ENCODE measurements at regions of chr12 and their contacts with region 1.

Region 1: DNA sequence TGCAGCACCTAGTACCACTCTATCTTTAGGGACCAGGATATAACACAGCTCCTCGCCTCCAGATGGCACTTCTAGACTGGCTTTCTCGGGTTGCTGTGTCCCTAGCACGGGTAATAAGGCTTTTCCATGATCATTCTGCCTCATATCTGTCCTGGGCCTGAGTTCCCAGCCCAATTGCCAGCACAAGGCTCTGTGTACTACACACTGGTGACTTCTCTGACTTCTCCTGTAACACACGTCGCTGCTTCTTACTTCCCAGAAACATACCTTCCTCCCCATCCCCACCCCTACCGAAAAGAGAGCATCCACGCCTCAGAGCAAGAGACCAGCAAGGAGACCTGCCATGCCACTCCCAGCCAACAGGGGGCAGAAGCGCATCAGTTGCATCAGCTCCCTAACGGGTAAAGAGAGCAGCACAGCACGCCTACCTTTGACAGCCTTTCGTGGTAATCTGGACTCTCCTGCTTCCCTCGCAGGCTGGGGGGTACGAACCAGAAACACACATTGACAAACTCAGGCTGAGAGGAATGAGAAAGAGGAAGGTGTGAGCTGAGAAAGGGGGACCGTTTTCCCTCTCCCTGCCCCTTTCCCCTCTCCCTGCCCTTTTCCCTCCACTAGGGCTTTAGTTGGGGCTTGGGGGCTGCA is 21.2 kb upstream of the ZNF740 start:
- DNase-seq: peak; percentile 96
- ATAC-seq: peak; percentile 99
- H3K4me3 Mint-ChIP-seq: peak overlapping the region; percentile 27
- H3K27ac Mint-ChIP-seq: peak overlapping the region; percentile 81
- H3K4me1 Mint-ChIP-seq: peaks cover 11% of the 10 kb centered on the region
- H3K27me3 Mint-ChIP-seq: no peaks in the 10 kb centered on the region

Region 2: DNA sequence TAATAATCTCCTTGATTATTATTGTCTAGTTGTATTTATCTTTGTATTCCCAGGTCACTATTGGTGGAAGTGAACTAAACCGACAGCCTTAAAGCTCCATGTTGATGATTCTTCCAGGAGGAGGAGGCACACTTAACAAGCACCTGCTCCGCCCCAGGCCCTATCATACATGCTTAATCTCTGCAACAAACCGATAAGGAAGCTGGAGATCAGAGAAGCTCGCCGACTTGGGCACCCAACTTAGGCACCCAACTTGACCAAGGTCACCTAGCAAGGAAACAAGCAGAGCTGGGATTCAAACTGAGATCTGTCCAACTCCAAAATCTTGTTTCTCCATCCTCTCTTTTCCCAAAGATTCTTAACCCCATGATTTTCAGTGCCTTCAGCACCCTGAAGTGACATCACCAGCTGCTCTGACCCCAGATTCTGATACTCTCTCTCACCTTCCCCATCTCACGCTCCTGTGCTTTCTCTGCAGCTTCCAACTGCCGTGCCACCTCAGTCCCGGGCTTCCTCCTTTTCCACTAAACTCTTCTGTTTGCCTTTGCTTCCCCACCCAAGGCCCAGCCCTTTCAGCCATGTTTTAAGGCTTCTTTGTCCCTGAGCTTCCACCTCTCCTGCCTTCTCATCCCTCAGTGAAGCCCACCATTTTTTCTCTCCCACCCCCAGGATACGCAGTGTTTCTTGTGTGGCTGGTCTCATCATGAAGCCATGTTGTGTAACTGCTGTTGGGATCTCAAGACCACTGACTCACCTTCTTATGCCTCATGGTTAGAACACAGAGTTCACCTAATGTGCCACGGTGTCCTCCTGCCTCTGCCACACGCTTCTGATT is 217.0 kb before region 1 on chr12:
- CTCF ChIA-PET with region 1: no interaction called
- POLR2A ChIA-PET with region 1: no interaction called
- intact Hi-C with region 1: no loop called
- DNase-seq: no peak
- ATAC-seq: no peak
- H3K4me3 Mint-ChIP-seq: no peak overlapping the region
- H3K27ac Mint-ChIP-seq: no peak overlapping the region
- H3K4me1 Mint-ChIP-seq: no peaks in the 10 kb centered on the region
- H3K27me3 Mint-ChIP-seq: peaks cover 2% of the 10 kb centered on the region

Region 3: DNA sequence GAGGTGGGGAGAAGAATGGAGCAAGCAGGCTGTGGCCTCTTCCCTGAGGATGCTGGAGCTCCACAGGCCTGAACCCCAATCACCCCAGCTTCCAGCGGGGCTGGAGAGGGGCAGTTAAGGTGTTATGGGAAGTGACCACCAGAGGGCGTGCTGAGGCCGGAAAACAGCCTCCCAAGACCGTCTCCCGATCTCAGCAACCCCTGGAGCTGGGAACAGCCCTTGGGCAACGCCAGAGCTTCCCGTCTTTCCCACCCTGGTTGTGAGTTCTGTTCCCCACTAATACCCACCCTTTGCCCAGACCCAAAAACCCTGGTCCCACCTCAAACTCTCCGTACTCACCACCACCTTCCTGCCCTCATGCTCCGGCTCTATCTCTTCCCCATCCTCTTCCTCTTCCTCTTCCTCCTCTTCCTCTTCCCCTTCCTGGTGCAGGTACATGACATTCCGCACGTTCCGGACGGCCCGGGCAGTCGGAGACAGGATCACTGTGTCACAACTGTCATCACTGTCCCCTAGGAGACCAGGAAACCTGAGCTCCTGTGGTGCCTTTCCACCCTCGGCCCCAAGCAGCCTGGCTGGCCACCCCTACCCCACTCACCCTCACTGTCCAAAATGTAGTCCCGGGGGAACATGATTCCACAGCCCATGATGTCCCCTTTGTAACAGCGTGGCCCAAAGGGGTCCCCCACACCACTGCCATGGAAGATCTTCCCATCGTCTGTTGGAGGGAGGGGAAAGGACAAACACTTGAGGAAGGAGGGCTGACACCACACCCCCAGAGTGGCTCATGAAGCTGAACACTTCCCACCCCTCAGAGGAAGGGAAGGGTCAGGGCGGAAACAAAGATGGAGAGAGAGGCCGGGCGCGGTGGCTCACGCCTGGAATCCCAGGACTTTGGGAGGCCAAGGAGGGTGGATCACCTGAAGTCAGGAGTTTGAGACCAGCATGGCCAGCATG is 93.1 kb before region 1 on chr12:
- CTCF ChIA-PET with region 1: interaction called, 11 read pairs
- POLR2A ChIA-PET with region 1: no interaction called
- intact Hi-C with region 1: no loop called
- DNase-seq: peak; percentile 85
- ATAC-seq: peak; percentile 78
- H3K4me3 Mint-ChIP-seq: no peak overlapping the region
- H3K27ac Mint-ChIP-seq: peak overlapping the region; percentile 48
- H3K4me1 Mint-ChIP-seq: peaks cover 7% of the 10 kb centered on the region
- H3K27me3 Mint-ChIP-seq: no peaks in the 10 kb centered on the region

Region 4: GRCh38 chr12:53090563-53090962 is 68.8 kb before region 1 on chr12:
- CTCF ChIA-PET with region 1: no interaction called
- POLR2A ChIA-PET with region 1: no interaction called
- intact Hi-C with region 1: no loop called
- DNase-seq: no peak
- ATAC-seq: no peak
- H3K4me3 Mint-ChIP-seq: no peak overlapping the region
- H3K27ac Mint-ChIP-seq: no peak overlapping the region
- H3K4me1 Mint-ChIP-seq: no peaks in the 10 kb centered on the region
- H3K27me3 Mint-ChIP-seq: peaks cover 2% of the 10 kb centered on the region

Region 5: DNA sequence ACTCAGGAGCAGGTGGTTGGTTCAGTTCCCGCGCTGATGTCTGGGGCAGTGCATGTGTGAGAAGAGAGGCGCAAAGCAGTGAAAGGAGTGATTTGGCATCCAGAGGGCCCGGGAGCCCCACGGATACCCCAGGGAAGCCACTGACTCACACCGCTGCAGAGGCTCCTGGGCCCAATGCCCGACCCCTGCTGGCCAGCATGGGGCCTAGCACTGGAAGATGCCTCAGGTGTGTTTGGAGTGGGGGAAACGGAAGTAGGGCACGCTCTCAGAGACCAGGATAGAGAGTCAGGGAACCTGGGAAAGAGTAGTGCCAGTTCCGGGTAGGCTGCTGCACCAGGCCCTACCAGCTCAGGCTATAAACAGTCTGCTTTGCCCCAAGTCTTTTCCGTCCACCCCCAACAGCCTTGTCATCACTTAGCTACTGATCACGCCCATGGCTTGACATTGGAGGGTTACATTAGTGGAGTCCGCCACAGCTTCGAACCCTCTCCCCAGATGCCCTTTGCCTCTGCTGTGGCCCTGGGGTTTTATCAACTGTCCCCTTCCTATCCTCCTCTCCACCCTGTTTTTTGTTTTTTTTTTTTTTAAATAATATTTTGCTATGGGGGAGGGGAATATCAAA is 30.9 kb after region 1 on chr12:
- CTCF ChIA-PET with region 1: interaction called, 94 read pairs
- POLR2A ChIA-PET with region 1: interaction called, 3 read pairs
- intact Hi-C with region 1: loop called (anchors 1 to 2 kb)
- DNase-seq: peak; percentile 74
- ATAC-seq: peak; percentile 94
- H3K4me3 Mint-ChIP-seq: no peak overlapping the region
- H3K27ac Mint-ChIP-seq: peak overlapping the region; percentile 17
- H3K4me1 Mint-ChIP-seq: peaks cover 14% of the 10 kb centered on the region
- H3K27me3 Mint-ChIP-seq: no peaks in the 10 kb centered on the region

Region 6: DNA sequence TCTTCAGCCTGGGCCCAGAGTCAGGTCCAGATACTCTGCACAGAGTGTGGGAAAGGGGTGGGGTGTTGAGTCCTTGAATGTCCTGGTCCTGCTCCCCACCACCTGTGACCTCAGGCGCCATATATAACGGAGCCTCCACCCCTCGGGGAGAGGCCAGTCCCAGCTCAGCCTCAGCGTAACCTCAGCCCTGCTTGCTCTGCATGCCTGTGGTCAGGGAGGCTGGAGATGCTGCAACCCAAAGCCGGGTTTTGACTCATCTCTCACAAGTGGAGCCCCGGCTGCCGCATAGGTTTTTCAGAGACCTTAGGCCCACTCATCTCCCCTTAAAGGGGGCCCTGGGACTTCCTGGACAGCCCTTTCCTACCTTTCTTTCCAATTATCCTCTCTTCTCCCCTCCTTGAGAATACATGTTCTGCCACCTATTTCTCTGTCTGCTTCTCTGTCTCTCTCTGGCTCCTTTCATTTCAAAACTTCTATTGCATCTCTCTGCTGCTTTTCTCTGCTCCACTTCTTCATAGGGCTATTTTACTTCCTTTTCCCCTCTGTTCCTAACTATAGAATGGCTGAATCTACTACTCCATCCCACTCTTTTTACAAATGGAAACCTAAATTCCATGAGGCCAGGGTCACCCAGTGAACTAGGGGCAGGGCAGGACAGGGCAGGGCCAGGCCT is 46.6 kb after region 1 on chr12:
- CTCF ChIA-PET with region 1: interaction called, 7 read pairs
- POLR2A ChIA-PET with region 1: no interaction called
- intact Hi-C with region 1: loop called in 1 of 2 experiments (anchors 2 kb)
- DNase-seq: peak; percentile 89
- ATAC-seq: peak; percentile 78
- H3K4me3 Mint-ChIP-seq: peak overlapping the region; percentile 77
- H3K27ac Mint-ChIP-seq: peak overlapping the region; percentile 87
- H3K4me1 Mint-ChIP-seq: peaks cover 74% of the 10 kb centered on the region
- H3K27me3 Mint-ChIP-seq: no peaks in the 10 kb centered on the region

Region 7: GRCh38 chr12:53267999-53268647 is 108.8 kb after region 1 on chr12 and contains the start of gene ESPL1:
- CTCF ChIA-PET with region 1: interaction called, 28 read pairs
- POLR2A ChIA-PET with region 1: interaction called, 3 read pairs
- intact Hi-C with region 1: loop called in 1 of 2 experiments (anchors 1 kb)
- DNase-seq: peak; percentile 93
- ATAC-seq: peak; percentile 86
- H3K4me3 Mint-ChIP-seq: peak within 1 kb of the TSS; percentile 92
- H3K27ac Mint-ChIP-seq: peak within 1 kb of the TSS; percentile 98
- H3K4me1 Mint-ChIP-seq: peaks cover 30% of the 10 kb centered on the region
- H3K27me3 Mint-ChIP-seq: no peaks in the 10 kb centered on the region
- total RNA-seq, gene ESPL1: 60.8 to 66.9 TPM

Region 8: DNA sequence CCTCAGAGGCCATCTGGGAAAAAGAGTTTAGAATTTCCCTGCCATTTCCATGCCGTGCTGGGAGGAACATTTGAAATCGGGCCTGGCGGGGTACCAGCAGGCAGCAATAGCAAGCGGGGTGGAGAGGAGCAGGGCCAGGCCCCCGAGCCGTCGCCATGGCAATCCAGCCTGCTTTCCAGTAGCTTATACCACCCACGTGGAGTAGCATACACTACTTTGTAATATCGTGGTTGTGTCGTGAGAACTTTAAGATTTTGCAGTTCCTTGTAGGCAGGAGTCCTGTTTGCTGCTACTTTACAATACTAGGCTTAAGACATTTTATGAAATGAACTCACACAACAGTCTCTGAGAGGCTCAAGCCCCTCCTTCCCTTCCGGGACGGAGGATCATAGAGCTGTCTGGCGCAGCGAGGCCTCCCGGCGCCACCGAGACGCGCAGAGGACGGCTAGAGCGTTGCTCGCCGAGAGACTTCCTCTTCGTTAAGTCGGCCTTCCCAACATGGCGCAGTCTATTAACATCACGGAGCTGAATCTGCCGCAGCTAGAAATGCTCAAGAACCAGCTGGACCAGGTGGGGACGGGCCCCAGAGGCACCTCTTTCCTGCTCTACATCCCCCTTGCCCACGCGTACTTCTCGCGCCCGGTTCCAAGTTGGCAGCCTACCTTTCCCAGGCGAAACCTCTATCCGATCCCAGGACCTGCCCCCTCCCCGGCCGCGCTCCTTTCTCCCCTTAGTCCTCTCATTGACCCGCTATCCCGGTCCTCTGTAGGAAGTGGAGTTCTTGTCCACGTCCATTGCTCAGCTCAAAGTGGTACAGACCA is 136.0 kb after region 1 on chr12 and contains the start of gene PFDN5:
- CTCF ChIA-PET with region 1: interaction called, 6 read pairs
- POLR2A ChIA-PET with region 1: no interaction called
- intact Hi-C with region 1: loop called (anchors 1 to 2 kb)
- DNase-seq: peak; percentile 93
- ATAC-seq: peak; percentile 88
- H3K4me3 Mint-ChIP-seq: peak within 1 kb of the TSS; percentile 85
- H3K27ac Mint-ChIP-seq: peak within 1 kb of the TSS; percentile 94
- H3K4me1 Mint-ChIP-seq: peaks cover 52% of the 10 kb centered on the region
- H3K27me3 Mint-ChIP-seq: no peaks in the 10 kb centered on the region
- total RNA-seq, gene PFDN5: 253 to 322 TPM